ENCODE measurements at regions of chr7 and their contacts with region 1.

Region 1: GRCh38 chr7:97027427-97028234 is 3.0 kb upstream of the DLX5 start:
- DNase-seq: peak in 4 of 5 donors; percentile 78 to 91 (median 84)
- H3K4me3 ChIP-seq: peak overlapping the region in 2 of 3 donors; percentile 46 to 60
- H3K27ac ChIP-seq: no peak overlapping the region
- H3K4me1 ChIP-seq: peaks cover 0 to 14% (median 4%) of the 10 kb centered on the region in 3 donors
- H3K27me3 ChIP-seq: peaks cover 44% of the 10 kb centered on the region
- CTCF ChIP-seq: peak; percentile 80

Region 2: DNA sequence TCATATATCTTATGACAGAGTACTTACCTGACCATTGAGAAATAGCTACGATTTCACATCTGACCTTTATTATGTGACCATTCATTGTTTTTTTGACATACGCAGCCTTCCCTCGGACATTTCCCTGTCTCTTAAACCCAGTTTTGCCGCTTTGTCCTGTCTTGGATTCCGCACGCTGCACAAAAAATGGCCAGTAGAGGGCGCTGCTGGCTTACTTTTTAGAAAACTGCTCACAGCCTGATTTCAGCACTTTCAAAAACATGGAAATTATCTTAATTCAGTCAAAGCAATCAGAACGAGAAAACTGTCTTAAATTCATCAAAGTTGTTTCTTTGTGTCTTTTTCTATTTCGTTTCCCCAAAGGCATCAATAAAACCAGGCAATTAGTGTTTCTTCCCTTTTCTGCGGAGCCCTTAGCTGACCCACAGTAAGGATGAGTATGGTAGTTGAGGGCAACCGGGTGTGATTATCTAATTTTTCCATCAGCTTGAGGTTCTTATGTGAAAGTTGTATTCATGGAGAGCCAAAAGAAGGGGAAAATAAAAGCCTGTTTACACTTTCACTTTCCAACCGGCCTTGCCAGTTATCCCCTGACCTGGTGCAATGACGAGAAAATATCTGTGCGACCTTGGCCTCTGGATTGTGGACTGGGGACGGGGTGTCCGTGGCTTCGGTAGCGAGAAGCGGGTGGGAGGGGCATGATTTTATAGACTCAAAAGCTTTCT is 1110.9 kb before region 1 on chr7:
- intact Hi-C with region 1: loop called (anchors 10 kb)
- DNase-seq: peak; percentile 79 to 88 (median 85)
- H3K4me3 ChIP-seq: peak overlapping the region in 2 of 3 donors; percentile 26 to 35
- H3K27ac ChIP-seq: no peak overlapping the region
- H3K4me1 ChIP-seq: no peaks in the 10 kb centered on the region
- H3K27me3 ChIP-seq: peaks cover 7% of the 10 kb centered on the region
- CTCF ChIP-seq: peak; percentile 97

Region 3: GRCh38 chr7:96075510-96076349 is 951.9 kb before region 1 on chr7:
- intact Hi-C with region 1: loop called (anchors 10 kb)
- DNase-seq: peak; percentile 56 to 84 (median 79)
- H3K4me3 ChIP-seq: peak overlapping the region; percentile 54 to 68 (median 55)
- H3K27ac ChIP-seq: no peak overlapping the region
- H3K4me1 ChIP-seq: no peaks in the 10 kb centered on the region
- H3K27me3 ChIP-seq: no peaks in the 10 kb centered on the region
- CTCF ChIP-seq: peak; percentile 78

Region 4: DNA sequence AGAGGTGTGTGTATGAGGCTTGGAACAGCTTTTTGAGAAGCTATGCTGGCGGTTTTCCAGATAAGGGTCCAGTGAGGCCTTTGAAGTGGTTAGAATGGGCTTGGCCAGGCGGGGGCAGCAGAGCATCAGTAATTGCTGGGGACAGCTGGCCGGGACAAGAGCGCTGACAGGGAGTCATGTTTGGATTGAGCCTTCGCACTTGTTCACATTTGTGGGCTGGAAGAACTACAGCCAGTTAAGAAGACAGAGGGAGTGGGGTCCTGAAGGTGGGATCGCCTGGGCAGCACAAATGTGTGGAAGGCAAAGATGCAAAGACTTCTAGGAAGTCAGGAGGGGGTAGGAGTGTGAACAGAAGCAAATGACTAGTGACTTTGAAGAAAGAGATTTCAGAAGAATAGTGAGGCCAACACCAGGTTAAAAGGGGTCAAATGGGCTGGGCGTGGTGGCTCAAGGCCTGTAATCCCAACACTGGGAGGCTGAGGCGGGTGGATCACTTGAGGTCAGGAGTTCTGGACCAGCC is 77.1 kb after region 1 on chr7:
- intact Hi-C with region 1: no loop called
- DNase-seq: peak; percentile 84 to 91 (median 89)
- H3K4me3 ChIP-seq: no peak overlapping the region
- H3K27ac ChIP-seq: no peak overlapping the region
- H3K4me1 ChIP-seq: no peaks in the 10 kb centered on the region
- H3K27me3 ChIP-seq: no peaks in the 10 kb centered on the region
- CTCF ChIP-seq: peak; percentile 88

Region 5: DNA sequence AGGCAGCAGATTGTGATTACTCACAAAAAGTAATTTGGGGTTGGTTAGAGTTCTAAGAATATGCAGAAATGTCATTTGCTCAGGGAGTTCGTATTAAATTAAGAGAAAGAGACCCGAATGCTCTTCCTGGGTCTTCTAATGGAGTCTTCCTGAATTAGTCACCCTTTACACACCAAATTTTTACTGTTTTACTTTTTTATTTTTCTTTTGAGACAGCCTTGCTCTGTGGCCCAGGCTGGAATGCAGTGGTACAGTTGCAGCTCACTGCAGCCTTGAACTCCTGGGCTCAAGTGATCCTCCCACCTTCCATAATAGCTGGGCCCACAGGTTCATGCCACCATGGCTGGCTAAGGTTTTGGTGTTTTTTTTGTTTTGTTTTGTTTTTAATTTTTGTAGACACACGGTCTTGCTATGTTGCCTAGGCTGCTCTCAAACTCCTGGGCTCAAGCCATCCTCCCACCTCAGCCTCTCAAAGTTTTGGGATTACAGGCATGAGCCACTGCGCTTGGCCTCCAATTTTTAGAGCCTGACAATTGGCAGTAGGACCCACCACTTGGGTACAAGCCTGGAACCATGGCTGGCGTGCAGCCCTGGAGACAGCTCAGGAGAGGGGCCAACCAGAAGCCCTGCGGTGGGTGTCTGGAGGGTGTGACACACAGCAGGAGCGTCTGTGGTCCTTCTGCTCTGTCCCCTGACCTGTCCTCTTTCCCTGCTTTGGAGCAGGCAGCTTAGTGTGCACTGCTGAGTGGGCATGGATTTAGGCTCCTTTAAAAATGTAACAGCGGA is 1167.2 kb after region 1 on chr7:
- intact Hi-C with region 1: no loop called
- DNase-seq: peak in 1 of 5 donors; percentile 59
- H3K4me3 ChIP-seq: no peak overlapping the region
- H3K27ac ChIP-seq: no peak overlapping the region
- H3K4me1 ChIP-seq: peaks cover 0 to 7% (median 0%) of the 10 kb centered on the region in 3 donors
- H3K27me3 ChIP-seq: no peaks in the 10 kb centered on the region
- CTCF ChIP-seq: no peak

Measured in kidney (tissue), 22 donors.